Activated T-helper 2 cell treated with anti-CD3 and anti-CD28 coated beads, Interferon-gamma antibody, Interleukin-2, Interleukin-4, amounts not matched to agents 10 μg/mL and 5 μg/mL and 100 μg/mL, durations not matched to agents 14 hours and 24 hours and 36 hours (primary cell): ENCODE measurements at regions of chr1 and their contacts with region 1.

Region 1: DNA sequence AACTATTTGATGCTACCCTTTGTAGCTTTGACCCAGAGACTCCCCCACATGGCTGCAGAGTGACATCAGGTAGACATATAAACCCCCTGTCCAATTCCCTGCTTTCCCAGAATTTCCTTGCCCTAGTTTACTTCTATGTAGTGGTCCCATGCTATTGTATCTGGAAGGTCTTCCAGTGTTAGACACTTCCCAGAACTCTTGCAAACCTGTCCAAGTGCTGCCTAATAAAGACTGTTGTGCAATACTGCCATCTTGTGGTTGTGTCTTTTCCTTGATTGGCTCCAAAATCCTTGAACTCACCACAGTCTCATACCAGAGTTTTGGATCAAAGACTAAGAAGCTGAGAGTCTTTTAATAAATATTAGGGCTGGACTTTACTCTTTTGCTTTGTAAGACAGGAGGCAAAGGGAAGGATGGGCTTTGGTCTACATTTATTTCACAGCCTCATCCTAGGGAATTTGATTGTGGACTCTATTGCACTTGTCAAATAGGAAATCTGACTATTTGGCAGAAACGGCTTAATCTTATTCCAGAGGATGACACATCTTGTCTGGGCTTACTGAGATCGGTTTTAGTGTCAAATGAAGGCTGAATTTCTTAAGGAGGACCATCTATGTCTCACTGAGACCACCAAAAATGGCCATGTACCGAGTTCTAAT is 169.9 kb downstream of the LRRC7 start:
- DNase-seq: no peak
- H3K4me3 Mint-ChIP-seq: no peak overlapping the region
- H3K27ac Mint-ChIP-seq: no peak overlapping the region
- H3K4me1 Mint-ChIP-seq: no peaks in the 10 kb centered on the region
- H3K27me3 Mint-ChIP-seq: no peaks in the 10 kb centered on the region

Region 2: DNA sequence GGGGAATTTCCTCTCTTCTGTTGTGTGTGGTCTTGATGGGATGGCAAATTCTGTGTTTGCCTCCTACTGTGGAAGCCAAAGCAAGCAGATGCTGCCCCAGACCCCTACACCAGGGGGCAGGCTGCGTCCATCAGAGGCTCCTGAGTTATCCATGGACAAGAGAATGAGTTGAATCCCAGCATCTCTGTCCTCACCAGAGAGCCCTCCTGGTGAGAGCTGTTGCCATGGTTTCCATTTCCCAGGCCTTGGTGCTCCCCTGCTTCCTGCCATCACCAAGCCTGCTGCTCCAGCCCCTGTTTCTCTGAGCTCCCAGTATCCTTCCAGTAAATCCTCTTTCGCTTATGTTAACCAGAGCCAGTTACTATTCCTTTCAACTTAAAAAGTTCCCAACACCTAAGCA is 1884.0 kb before region 1 on chr1:
- intact Hi-C with region 1: loop called (anchors 5 kb)
- DNase-seq: no peak
- H3K4me3 Mint-ChIP-seq: no peak overlapping the region
- H3K27ac Mint-ChIP-seq: no peak overlapping the region
- H3K4me1 Mint-ChIP-seq: no peaks in the 10 kb centered on the region
- H3K27me3 Mint-ChIP-seq: peaks cover 10% of the 10 kb centered on the region

Region 3: GRCh38 chr1:68470388-68470970 is 1267.2 kb before region 1 on chr1:
- intact Hi-C with region 1: loop called (anchors 5 kb)
- DNase-seq: no peak
- H3K4me3 Mint-ChIP-seq: no peak overlapping the region
- H3K27ac Mint-ChIP-seq: no peak overlapping the region
- H3K4me1 Mint-ChIP-seq: no peaks in the 10 kb centered on the region
- H3K27me3 Mint-ChIP-seq: no peaks in the 10 kb centered on the region

Region 4: DNA sequence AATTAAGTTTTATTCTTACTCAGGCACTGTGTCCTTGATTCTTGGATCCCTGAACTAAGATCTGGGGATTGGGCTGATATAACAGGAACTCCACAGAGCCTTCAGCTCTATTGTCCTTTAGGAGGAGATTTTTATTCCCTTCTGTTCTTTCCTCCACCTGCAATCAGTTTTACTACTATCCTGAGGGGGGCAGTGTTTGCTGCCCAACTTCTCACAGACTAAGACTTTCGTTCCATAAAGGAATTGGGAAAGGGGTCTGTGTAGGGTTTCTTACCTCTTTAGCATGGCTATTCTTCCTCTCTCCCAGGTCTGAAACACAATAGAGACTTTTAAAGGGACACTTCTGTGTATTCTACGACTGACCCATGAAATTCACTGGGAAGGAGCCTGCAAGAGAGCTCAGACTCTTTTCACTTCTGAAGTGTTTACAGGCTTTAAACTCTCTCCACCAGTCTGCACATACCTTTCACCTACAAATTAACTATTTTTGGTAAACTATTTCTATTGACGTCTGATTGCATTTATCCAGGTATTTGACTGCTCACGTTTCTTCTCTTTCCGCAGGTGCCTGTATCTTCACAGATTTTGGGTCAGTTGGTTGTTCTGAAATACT is 1137.5 kb before region 1 on chr1:
- intact Hi-C with region 1: loop called (anchors 10 kb)
- DNase-seq: no peak
- H3K4me3 Mint-ChIP-seq: no peak overlapping the region
- H3K27ac Mint-ChIP-seq: no peak overlapping the region
- H3K4me1 Mint-ChIP-seq: no peaks in the 10 kb centered on the region
- H3K27me3 Mint-ChIP-seq: no peaks in the 10 kb centered on the region

Region 5: GRCh38 chr1:69710484-69711189 is 27.0 kb before region 1 on chr1:
- intact Hi-C with region 1: no loop called
- DNase-seq: no peak
- H3K4me3 Mint-ChIP-seq: no peak overlapping the region
- H3K27ac Mint-ChIP-seq: no peak overlapping the region
- H3K4me1 Mint-ChIP-seq: no peaks in the 10 kb centered on the region
- H3K27me3 Mint-ChIP-seq: no peaks in the 10 kb centered on the region

Region 6: DNA sequence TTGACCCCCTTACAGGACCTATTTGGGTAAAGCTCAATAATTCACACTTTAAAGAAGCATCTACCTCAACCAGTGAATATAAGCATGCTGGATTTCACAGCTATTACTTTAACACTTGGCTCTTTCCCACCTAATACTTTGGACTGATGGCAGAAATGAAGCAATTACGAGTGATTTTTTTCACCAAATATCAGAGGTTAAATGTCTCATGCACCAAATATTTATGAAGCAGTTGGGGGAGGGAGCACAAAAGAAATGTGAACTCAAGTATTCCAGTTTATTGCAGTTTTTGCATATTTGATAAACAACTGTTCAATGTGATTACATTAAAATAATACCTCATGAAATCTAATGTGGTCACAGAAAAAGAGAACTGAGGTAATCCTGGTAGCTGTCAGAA is 53.7 kb after region 1 on chr1:
- intact Hi-C with region 1: no loop called
- DNase-seq: no peak
- H3K4me3 Mint-ChIP-seq: no peak overlapping the region
- H3K27ac Mint-ChIP-seq: no peak overlapping the region
- H3K4me1 Mint-ChIP-seq: no peaks in the 10 kb centered on the region
- H3K27me3 Mint-ChIP-seq: no peaks in the 10 kb centered on the region

Region 7: GRCh38 chr1:69814926-69815325 is 77.3 kb after region 1 on chr1:
- intact Hi-C with region 1: no loop called
- DNase-seq: no peak
- H3K4me3 Mint-ChIP-seq: no peak overlapping the region
- H3K27ac Mint-ChIP-seq: no peak overlapping the region
- H3K4me1 Mint-ChIP-seq: no peaks in the 10 kb centered on the region
- H3K27me3 Mint-ChIP-seq: no peaks in the 10 kb centered on the region

Region 8: GRCh38 chr1:69858534-69858933 is 120.9 kb after region 1 on chr1:
- intact Hi-C with region 1: no loop called
- DNase-seq: no peak
- H3K4me3 Mint-ChIP-seq: no peak overlapping the region
- H3K27ac Mint-ChIP-seq: no peak overlapping the region
- H3K4me1 Mint-ChIP-seq: no peaks in the 10 kb centered on the region
- H3K27me3 Mint-ChIP-seq: no peaks in the 10 kb centered on the region